CD8-positive, alpha-beta memory T cell (primary cell): ENCODE measurements at regions of chr6 and their contacts with region 1.

Region 1: GRCh38 chr6:106591111-106591825 is 38.0 kb downstream of the RTN4IP1 start:
- DNase-seq: no peak
- H3K4me3 ChIP-seq: no peak overlapping the region
- H3K4me3 Mint-ChIP-seq: no peak overlapping the region
- H3K27ac ChIP-seq: no peak overlapping the region
- H3K27ac Mint-ChIP-seq: no peak overlapping the region
- H3K4me1 ChIP-seq: no peaks in the 10 kb centered on the region
- H3K4me1 Mint-ChIP-seq: no peaks in the 10 kb centered on the region
- H3K27me3 ChIP-seq: no peaks in the 10 kb centered on the region
- H3K27me3 Mint-ChIP-seq: no peaks in the 10 kb centered on the region

Region 2: GRCh38 chr6:106421496-106421895 is 169.8 kb before region 1 on chr6:
- CTCF ChIA-PET with region 1: no interaction called
- POLR2A ChIA-PET with region 1: interaction called, 10 read pairs
- DNase-seq: no peak
- H3K4me3 ChIP-seq: no peak overlapping the region
- H3K4me3 Mint-ChIP-seq: no peak overlapping the region
- H3K27ac ChIP-seq: no peak overlapping the region
- H3K27ac Mint-ChIP-seq: no peak overlapping the region
- H3K4me1 ChIP-seq: no peaks in the 10 kb centered on the region
- H3K4me1 Mint-ChIP-seq: no peaks in the 10 kb centered on the region
- H3K27me3 ChIP-seq: no peaks in the 10 kb centered on the region
- H3K27me3 Mint-ChIP-seq: peaks cover 2 to 21% of the 10 kb centered on the region in 2 donors

Region 3: GRCh38 chr6:106439446-106439845 is 151.8 kb before region 1 on chr6:
- CTCF ChIA-PET with region 1: no interaction called
- POLR2A ChIA-PET with region 1: no interaction called
- DNase-seq: no peak
- H3K4me3 ChIP-seq: no peak overlapping the region
- H3K4me3 Mint-ChIP-seq: no peak overlapping the region
- H3K27ac ChIP-seq: no peak overlapping the region
- H3K27ac Mint-ChIP-seq: no peak overlapping the region
- H3K4me1 ChIP-seq: no peaks in the 10 kb centered on the region
- H3K4me1 Mint-ChIP-seq: no peaks in the 10 kb centered on the region
- H3K27me3 ChIP-seq: peaks cover 3% of the 10 kb centered on the region
- H3K27me3 Mint-ChIP-seq: peaks cover 17 to 53% of the 10 kb centered on the region in 2 donors

Region 4: DNA sequence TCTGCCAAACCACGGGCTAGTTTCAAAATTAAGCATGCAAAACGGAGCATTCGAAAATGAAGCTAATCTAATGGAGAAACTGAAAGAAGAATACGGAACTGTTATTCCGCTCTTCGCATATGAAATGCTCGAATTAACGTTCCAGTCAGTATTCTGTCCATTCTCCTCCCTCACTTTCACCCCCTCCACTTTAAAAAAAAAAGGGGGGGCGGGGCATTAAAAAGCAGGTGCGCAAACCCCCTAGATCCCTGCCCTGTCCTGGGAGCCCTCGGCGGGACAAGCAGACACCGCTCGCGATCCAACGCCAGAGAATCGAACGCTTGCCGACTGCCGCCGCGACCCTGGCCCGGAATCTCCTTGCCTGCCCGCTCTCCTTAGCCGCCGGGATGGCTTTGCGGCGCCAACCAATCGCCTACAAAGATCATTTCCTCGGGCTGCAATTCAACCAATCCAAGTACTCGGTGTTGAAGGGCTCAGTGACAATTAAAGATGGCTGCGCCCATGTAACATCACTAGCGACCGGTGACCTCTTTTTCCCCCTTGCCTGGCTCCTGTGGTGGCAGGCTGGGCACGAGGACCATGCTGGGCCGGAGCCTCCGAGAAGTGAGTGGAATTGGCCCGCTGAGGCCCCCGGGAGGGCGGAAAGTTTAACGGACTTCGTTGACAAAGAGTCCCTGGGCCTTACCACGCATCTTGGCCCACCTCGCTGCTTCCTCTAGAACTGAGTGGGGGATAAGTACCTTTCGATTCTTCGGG is 38.0 kb after region 1 on chr6 and contains the starts of genes QRSL1 and RTN4IP1:
- CTCF ChIA-PET with region 1: no interaction called
- POLR2A ChIA-PET with region 1: no interaction called
- DNase-seq: peak; percentile 73 to 92 (median 89)
- H3K4me3 ChIP-seq: peak within 1 kb of the TSS; percentile 93
- H3K4me3 Mint-ChIP-seq: peak within 1 kb of the TSS; percentile 93 to 99 (median 98)
- H3K27ac ChIP-seq: peak within 1 kb of the TSS; percentile 82
- H3K27ac Mint-ChIP-seq: peak within 1 kb of the TSS; percentile 95 to 99 (median 98)
- H3K4me1 ChIP-seq: peaks cover 22% of the 10 kb centered on the region
- H3K4me1 Mint-ChIP-seq: peaks cover 31 to 46% (median 36%) of the 10 kb centered on the region in 3 donors
- H3K27me3 ChIP-seq: no peaks in the 10 kb centered on the region
- H3K27me3 Mint-ChIP-seq: no peaks in the 10 kb centered on the region
- total RNA-seq, gene QRSL1: 23.0 to 27.2 TPM
- total RNA-seq, gene RTN4IP1: 9.5 to 10.3 TPM